ENCODE measurements at regions of chr7 and their contacts with region 1.

Region 1: DNA sequence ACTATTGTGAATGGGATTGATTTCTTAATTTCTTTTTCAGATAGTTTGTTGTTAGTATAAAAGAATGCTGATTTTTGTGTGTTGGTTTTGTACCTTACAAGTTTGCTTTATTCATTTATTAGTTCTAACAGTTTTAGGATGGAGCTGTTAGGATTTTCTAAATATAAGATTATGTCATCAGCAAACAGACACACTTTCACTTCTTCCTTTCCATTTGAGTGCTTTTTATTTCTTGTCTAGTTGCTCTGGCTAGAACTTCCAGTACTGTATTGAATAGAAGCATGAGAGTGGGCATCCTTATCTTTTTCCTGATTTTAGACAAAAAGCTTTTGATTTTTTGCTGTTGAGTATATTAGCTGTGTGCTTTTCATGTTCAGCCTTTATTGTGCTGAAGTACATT is 81.5 kb downstream of the DNAH11 start:
- DNase-seq: no peak
- H3K4me3 Mint-ChIP-seq: no peak overlapping the region
- H3K27ac Mint-ChIP-seq: no peak overlapping the region
- H3K4me1 Mint-ChIP-seq: peaks cover 2% of the 10 kb centered on the region
- H3K27me3 Mint-ChIP-seq: no peaks in the 10 kb centered on the region

Region 2: DNA sequence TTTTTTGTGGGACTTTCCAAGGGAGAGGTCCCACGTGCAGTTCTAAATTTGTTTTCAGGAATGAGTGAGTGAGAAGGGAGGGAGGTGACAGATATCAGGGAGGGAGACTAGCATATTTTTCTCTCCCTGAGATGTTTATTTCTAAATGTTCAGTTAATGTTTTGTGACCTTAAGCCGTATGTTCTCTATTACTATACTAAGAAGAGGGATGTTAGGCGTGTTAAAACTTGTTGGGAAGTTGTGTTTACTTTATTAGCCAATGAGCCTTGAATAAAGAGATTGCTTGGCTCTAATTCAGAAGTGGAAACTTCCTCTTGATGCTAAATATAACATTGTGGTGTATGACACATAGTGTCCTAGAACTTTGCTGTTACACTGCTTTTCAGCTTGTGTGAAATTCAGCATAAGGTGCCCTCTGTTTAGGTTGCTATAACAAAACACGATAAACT is 44.2 kb before region 1 on chr7:
- intact Hi-C with region 1: no loop called
- DNase-seq: no peak
- H3K4me3 Mint-ChIP-seq: no peak overlapping the region
- H3K27ac Mint-ChIP-seq: peak overlapping the region; percentile 69
- H3K4me1 Mint-ChIP-seq: peaks cover 6% of the 10 kb centered on the region
- H3K27me3 Mint-ChIP-seq: no peaks in the 10 kb centered on the region

Region 3: GRCh38 chr7:21603972-21604749 is 20.2 kb before region 1 on chr7:
- intact Hi-C with region 1: loop called (anchors 1 kb)
- DNase-seq: no peak
- H3K4me3 Mint-ChIP-seq: peak overlapping the region; percentile 9
- H3K27ac Mint-ChIP-seq: peak overlapping the region; percentile 55
- H3K4me1 Mint-ChIP-seq: peaks cover 12% of the 10 kb centered on the region
- H3K27me3 Mint-ChIP-seq: no peaks in the 10 kb centered on the region

Measured in activated CD4-positive, alpha-beta T cell treated with anti-CD3 and anti-CD28 coated beads, Interleukin-2, amount 10 ng/mL, durations not matched to agents 24 days and 14 days (primary cell).